Activated T-helper 1 cell treated with anti-CD3 and anti-CD28 coated beads, Interleukin-12 subunit alpha, Interleukin-12 subunit beta, Interleukin-2, Interleukin-4 antibody, amounts not matched to agents 30 ng/mL and 10 ng/mL and 1 ng/mL, durations not matched to agents 14 hours and 24 hours and 36 hours (primary cell): ENCODE measurements at regions of chr2 and their contacts with region 1.

Region 1: GRCh38 chr2:68385220-68385906 is 20.3 kb downstream of the PLEK start:
- DNase-seq: no peak
- H3K4me3 Mint-ChIP-seq: peak overlapping the region; percentile 42
- H3K27ac Mint-ChIP-seq: peak overlapping the region; percentile 91
- H3K4me1 Mint-ChIP-seq: peaks cover 49% of the 10 kb centered on the region
- H3K27me3 Mint-ChIP-seq: peaks cover 2% of the 10 kb centered on the region

Region 2: GRCh38 chr2:67397143-67397986 is 988.0 kb before region 1 on chr2 and contains the start of gene ETAA1:
- intact Hi-C with region 1: loop called (anchors 10 kb)
- DNase-seq: peak; percentile 90
- H3K4me3 Mint-ChIP-seq: peak within 1 kb of the TSS; percentile 97
- H3K27ac Mint-ChIP-seq: peak within 1 kb of the TSS; percentile 99
- H3K4me1 Mint-ChIP-seq: peaks cover 17% of the 10 kb centered on the region
- H3K27me3 Mint-ChIP-seq: peaks cover 2% of the 10 kb centered on the region
- total RNA-seq, gene ETAA1: 9.5 and 10.7 TPM in 2 replicates

Region 3: GRCh38 chr2:68371581-68371980 is 13.8 kb before region 1 on chr2:
- intact Hi-C with region 1: loop called (anchors 1 kb)
- DNase-seq: no peak
- H3K4me3 Mint-ChIP-seq: peak overlapping the region; percentile 21
- H3K27ac Mint-ChIP-seq: peak overlapping the region; percentile 3
- H3K4me1 Mint-ChIP-seq: peaks cover 17% of the 10 kb centered on the region
- H3K27me3 Mint-ChIP-seq: peaks cover 14% of the 10 kb centered on the region

Region 4: GRCh38 chr2:68441179-68441993 is 56.0 kb after region 1 on chr2:
- intact Hi-C with region 1: loop called (anchors 1 kb)
- DNase-seq: peak; percentile 76
- H3K4me3 Mint-ChIP-seq: peak overlapping the region; percentile 55
- H3K27ac Mint-ChIP-seq: peak overlapping the region; percentile 88
- H3K4me1 Mint-ChIP-seq: peaks cover 31% of the 10 kb centered on the region
- H3K27me3 Mint-ChIP-seq: peaks cover 10% of the 10 kb centered on the region

Region 5: DNA sequence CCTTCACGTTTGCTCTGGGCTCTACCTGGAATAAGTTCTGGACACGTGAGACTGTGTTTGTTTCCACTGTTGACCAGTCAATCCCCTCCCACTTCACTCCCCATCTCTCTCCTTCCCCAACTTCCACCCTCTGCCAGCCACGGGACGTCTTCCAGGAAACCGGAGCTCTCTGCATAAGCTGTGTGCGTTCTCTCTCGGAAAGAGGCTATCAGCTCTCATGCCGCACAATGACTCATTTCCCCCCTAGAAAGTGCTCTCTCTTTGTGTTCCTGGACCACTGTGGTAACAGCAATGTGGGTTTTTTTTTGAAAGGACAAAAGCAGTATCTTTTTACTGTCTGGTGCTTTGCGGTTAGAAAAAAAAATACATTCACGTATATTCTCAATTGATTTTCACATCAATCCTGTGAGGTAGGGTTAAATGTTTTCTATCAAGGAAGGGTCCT is 268.2 kb after region 1 on chr2:
- intact Hi-C with region 1: loop called (anchors 1 kb)
- DNase-seq: peak; percentile 51
- H3K4me3 Mint-ChIP-seq: peak overlapping the region; percentile 8
- H3K27ac Mint-ChIP-seq: peak overlapping the region; percentile 64
- H3K4me1 Mint-ChIP-seq: peaks cover 47% of the 10 kb centered on the region
- H3K27me3 Mint-ChIP-seq: peaks cover 26% of the 10 kb centered on the region

Region 6: DNA sequence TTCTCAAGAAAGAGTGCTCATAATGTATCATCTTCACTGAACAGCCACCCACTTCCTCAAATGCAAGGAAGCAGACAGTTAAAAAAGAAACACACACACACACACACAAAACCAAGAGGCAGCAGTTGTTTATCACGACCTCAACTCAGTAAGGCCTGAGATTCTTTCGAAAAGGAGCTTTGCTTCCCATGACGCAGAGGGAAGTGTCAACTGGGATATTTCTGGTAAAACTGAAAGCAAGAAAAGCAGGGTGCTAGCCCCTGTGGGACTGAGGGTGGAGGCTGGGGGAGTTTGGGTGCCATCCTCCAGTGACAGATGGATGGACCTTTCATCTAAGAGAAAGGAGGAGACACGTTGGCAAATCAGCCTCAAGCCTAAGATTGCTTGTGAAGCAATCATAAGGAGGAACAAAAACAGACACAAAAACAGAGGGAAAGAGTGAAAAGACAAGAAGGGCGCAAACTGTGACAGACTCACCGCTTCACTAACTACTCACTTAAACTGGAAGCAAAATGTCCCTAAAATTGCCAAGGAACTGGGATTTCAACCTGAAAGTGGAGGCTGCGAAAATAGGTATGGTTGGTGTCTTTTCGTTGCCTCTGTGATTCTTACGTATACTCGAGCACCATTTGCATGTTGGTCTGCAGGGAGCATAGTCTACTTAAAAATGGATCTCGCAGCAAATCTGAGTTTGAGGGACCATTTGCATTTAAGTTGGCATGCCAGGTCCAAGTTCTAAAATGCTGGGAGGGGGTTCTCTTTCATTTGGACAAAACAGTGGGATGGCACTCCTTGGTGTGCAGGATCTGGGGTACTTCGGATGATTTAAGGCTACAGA is 349.5 kb after region 1 on chr2 and contains the start of gene ARHGAP25:
- intact Hi-C with region 1: loop called (anchors 5 kb)
- DNase-seq: peak; percentile 61
- H3K4me3 Mint-ChIP-seq: no peak within 1 kb of the TSS
- H3K27ac Mint-ChIP-seq: no peak within 1 kb of the TSS
- H3K4me1 Mint-ChIP-seq: peaks cover 42% of the 10 kb centered on the region
- H3K27me3 Mint-ChIP-seq: no peaks in the 10 kb centered on the region
- total RNA-seq, gene ARHGAP25: 71.6 and 74.2 TPM in 2 replicates

Region 7: DNA sequence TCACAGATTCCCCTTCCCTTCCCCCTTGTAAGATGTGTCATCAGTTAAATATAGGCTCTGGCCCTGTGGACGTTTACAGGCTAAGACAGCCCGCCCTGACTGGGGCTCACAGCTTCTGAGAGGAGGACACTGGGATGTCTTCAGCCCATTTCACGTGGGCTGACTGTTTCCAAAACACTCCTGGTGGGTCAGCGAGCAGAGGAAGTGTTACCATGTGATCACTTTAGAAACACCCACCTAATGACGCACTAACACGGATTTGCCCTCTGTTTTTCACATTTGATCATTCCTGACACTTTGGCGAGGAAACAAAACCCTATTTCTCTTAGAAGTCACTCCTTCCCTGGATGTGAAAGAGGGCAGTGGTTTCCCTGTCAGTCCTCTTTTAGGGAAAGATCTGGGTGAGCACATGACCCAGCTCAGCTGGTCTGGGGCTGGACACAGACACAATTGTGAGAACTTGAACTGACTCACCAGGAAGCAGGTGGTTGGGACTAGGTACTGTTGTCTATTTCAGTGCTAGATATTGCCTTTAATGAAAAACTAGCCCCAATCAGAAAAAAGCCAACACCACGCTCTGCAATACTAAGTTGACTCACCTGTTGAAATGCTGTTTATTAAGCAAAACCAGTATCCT is 447.0 kb after region 1 on chr2:
- intact Hi-C with region 1: loop called (anchors 5 kb)
- DNase-seq: no peak
- H3K4me3 Mint-ChIP-seq: peak overlapping the region; percentile 62
- H3K27ac Mint-ChIP-seq: peak overlapping the region; percentile 88
- H3K4me1 Mint-ChIP-seq: peaks cover 86% of the 10 kb centered on the region
- H3K27me3 Mint-ChIP-seq: no peaks in the 10 kb centered on the region